ENCODE measurements at regions of chr5 and their contacts with region 1.

Region 1: GRCh38 chr5:148740966-148741742 is 85.3 kb upstream of the ADRB2 start:
- DNase-seq: peak; percentile 48
- H3K4me3 ChIP-seq: no peak overlapping the region
- H3K27ac ChIP-seq: no peak overlapping the region
- H3K4me1 ChIP-seq: no peaks in the 10 kb centered on the region
- H3K27me3 ChIP-seq: peaks cover 30% of the 10 kb centered on the region
- CTCF ChIP-seq: peak; percentile 68

Region 2: DNA sequence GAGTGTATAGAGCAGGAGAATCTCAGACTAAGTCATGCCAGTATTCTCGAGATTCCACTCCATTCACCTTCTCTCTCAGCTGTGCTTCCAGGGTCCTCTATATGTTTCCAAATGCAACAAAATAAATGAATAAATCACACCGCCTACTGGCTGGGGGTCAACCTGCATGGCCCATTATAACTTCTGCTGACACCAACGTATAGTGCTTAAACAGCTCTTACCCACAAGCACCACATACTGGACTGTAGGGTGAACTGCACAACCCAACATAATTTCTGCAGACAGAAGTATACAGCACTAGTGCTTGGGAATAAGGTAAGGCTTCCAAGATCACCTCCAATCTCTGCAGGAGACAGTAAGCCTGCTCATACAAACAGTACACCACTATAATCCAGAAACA is 53.7 kb before region 1 on chr5:
- CTCF ChIA-PET with region 1: no interaction called
- POLR2A ChIA-PET with region 1: no interaction called
- intact Hi-C with region 1: no loop called
- DNase-seq: peak; percentile 56
- H3K4me3 ChIP-seq: no peak overlapping the region
- H3K27ac ChIP-seq: no peak overlapping the region
- H3K4me1 ChIP-seq: no peaks in the 10 kb centered on the region
- H3K27me3 ChIP-seq: peaks cover 11% of the 10 kb centered on the region
- CTCF ChIP-seq: peak; percentile 54

Region 3: GRCh38 chr5:148957591-148958202 is 216.5 kb after region 1 on chr5:
- CTCF ChIA-PET with region 1: interaction called, 9 read pairs
- POLR2A ChIA-PET with region 1: no interaction called
- intact Hi-C with region 1: loop called (anchors 2 kb)
- DNase-seq: peak; percentile 68
- H3K4me3 ChIP-seq: no peak overlapping the region
- H3K27ac ChIP-seq: no peak overlapping the region
- H3K4me1 ChIP-seq: no peaks in the 10 kb centered on the region
- H3K27me3 ChIP-seq: no peaks in the 10 kb centered on the region
- CTCF ChIP-seq: peak; percentile 84

Region 4: GRCh38 chr5:148998174-148998797 is 257.1 kb after region 1 on chr5:
- CTCF ChIA-PET with region 1: interaction called, 3 read pairs
- POLR2A ChIA-PET with region 1: no interaction called
- intact Hi-C with region 1: loop called (anchors 2 kb)
- DNase-seq: peak; percentile 64
- H3K4me3 ChIP-seq: no peak overlapping the region
- H3K27ac ChIP-seq: no peak overlapping the region
- H3K4me1 ChIP-seq: peaks cover 6% of the 10 kb centered on the region
- H3K27me3 ChIP-seq: no peaks in the 10 kb centered on the region
- CTCF ChIP-seq: peak; percentile 70

Region 5: GRCh38 chr5:149268928-149269557 is 527.9 kb after region 1 on chr5:
- CTCF ChIA-PET with region 1: no interaction called
- POLR2A ChIA-PET with region 1: no interaction called
- intact Hi-C with region 1: loop called (anchors 5 kb)
- DNase-seq: peak; percentile 68
- H3K4me3 ChIP-seq: no peak overlapping the region
- H3K27ac ChIP-seq: no peak overlapping the region
- H3K4me1 ChIP-seq: no peaks in the 10 kb centered on the region
- H3K27me3 ChIP-seq: peaks cover 39% of the 10 kb centered on the region
- CTCF ChIP-seq: peak; percentile 69